ENCODE measurements at regions of chr10 and their contacts with region 1.

Region 1: DNA sequence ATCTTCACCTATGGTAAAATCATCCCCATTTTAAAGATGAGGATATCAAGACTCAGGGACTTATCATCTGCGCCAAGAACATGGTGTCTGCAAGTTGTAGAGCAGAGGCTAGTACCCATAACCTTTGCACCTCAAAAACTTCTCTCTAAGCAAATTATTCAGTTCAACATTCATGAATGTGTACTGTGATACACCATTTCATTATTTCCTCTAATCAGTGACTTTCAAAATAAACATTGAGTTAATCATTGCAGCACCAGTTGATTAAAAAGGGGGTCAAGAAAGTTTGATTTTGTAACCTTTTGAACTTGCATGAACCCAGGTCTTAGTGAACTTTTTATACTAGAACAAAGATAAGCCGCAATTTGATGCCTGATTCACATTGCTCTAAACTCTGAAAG is 47.6 kb upstream of the CYP2C8 start:
- DNase-seq: no peak
- H3K4me3 ChIP-seq: no peak overlapping the region
- H3K27ac ChIP-seq: no peak overlapping the region
- H3K4me1 ChIP-seq: no peaks in the 10 kb centered on the region
- H3K27me3 ChIP-seq: no peaks in the 10 kb centered on the region
- CTCF ChIP-seq: no peak

Region 2: GRCh38 chr10:94997741-94998174 is 119.1 kb before region 1 on chr10:
- intact Hi-C with region 1: no loop called
- DNase-seq: no peak
- H3K4me3 ChIP-seq: no peak overlapping the region
- H3K27ac ChIP-seq: no peak overlapping the region
- H3K4me1 ChIP-seq: no peaks in the 10 kb centered on the region
- H3K27me3 ChIP-seq: no peaks in the 10 kb centered on the region
- CTCF ChIP-seq: no peak

Region 3: DNA sequence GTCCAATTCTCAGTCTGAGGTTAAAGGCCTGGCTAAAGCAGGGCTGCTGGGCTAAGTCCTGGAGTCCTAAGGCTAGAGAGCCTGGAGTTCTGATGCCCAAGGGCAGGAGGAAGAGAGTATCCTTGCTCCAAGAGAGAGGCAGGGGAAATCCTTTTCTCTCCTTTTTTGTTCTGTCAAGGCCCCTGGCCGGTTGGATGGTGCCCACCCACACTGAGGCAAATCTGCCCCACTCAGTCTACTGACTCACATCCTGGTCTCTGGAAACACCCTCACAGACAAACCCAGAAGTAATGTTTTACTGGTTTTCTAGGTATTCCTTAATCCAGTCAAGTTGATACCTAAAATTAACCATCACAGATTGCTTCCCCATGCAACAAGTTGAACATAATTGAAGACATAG is 1036.2 kb after region 1 on chr10:
- intact Hi-C with region 1: loop called (anchors 10 kb)
- DNase-seq: no peak
- H3K4me3 ChIP-seq: no peak overlapping the region
- H3K27ac ChIP-seq: no peak overlapping the region
- H3K4me1 ChIP-seq: no peaks in the 10 kb centered on the region
- H3K27me3 ChIP-seq: no peaks in the 10 kb centered on the region
- CTCF ChIP-seq: no peak

Measured in ascending aorta (tissue), 2 donors.